ENCODE measurements at regions of chr11 and their contacts with region 1.

Region 1: GRCh38 chr11:910589-911195 is at the start of gene CHID1:
- DNase-seq: peak; percentile 89 to 94 (median 89)
- ATAC-seq: peak; percentile 84 to 97 (median 96)
- H3K4me3 ChIP-seq: peak within 1 kb of the TSS; percentile 39 to 98 (median 92)
- H3K27ac ChIP-seq: peak within 1 kb of the TSS; percentile 79 to 99 (median 95)
- H3K4me1 ChIP-seq: peaks cover 0 to 24% (median 13%) of the 10 kb centered on the region in 12 donors
- H3K27me3 ChIP-seq: no peaks in the 10 kb centered on the region
- CTCF ChIP-seq: peak in 4 of 12 donors; percentile 4 to 23 (median 18)
- POLR2A ChIP-seq: peak in 1 of 2 donors; percentile 59
- total RNA-seq, gene CHID1: 42.0 to 87.7 (median 58.9) TPM

Region 2: GRCh38 chr11:765025-765801 is 145.5 kb before region 1 on chr11:
- intact Hi-C with region 1: no loop called
- DNase-seq: peak in 2 of 5 donors; percentile 62 to 69
- ATAC-seq: peak in 3 of 4 donors; percentile 57 to 74 (median 69)
- H3K4me3 ChIP-seq: no peak overlapping the region
- H3K27ac ChIP-seq: no peak overlapping the region
- H3K4me1 ChIP-seq: no peaks in the 10 kb centered on the region
- H3K27me3 ChIP-seq: no peaks in the 10 kb centered on the region
- CTCF ChIP-seq: peak; percentile 41 to 60 (median 48)
- POLR2A ChIP-seq: no peak

Region 3: GRCh38 chr11:798093-798713 is 112.5 kb before region 1 on chr11 and contains the start of gene SLC25A22:
- intact Hi-C with region 1: loop called in 1 of 10 experiments (anchors 5 kb)
- DNase-seq: peak; percentile 74 to 90 (median 80)
- ATAC-seq: peak; percentile 21 to 77 (median 56)
- H3K4me3 ChIP-seq: peak within 1 kb of the TSS; percentile 50 to 89 (median 78)
- H3K27ac ChIP-seq: peak within 1 kb of the TSS; percentile 37 to 88 (median 84)
- H3K4me1 ChIP-seq: peaks cover 6 to 40% (median 24%) of the 10 kb centered on the region in 12 donors
- H3K27me3 ChIP-seq: no peaks in the 10 kb centered on the region
- CTCF ChIP-seq: peak; percentile 61 to 96 (median 81)
- POLR2A ChIP-seq: peak in 1 of 2 donors; percentile 15
- total RNA-seq, gene SLC25A22: 2.1 to 12.8 (median 4.4) TPM

Region 4: GRCh38 chr11:809287-810039 is 101.2 kb before region 1 on chr11 and contains the start of gene RPLP2:
- intact Hi-C with region 1: loop called in 1 of 10 experiments (anchors 5 kb)
- DNase-seq: peak; percentile 98 to 99 (median 99)
- ATAC-seq: peak; percentile 89 to 95 (median 93)
- H3K4me3 ChIP-seq: peak within 1 kb of the TSS; percentile 73 to 100 (median 96)
- H3K27ac ChIP-seq: peak within 1 kb of the TSS; percentile 76 to 100 (median 96)
- H3K4me1 ChIP-seq: peaks cover 5 to 50% (median 35%) of the 10 kb centered on the region in 12 donors
- H3K27me3 ChIP-seq: no peaks in the 10 kb centered on the region
- CTCF ChIP-seq: no peak
- POLR2A ChIP-seq: peak; percentile 60 to 81
- total RNA-seq, gene RPLP2: 236 to 1,207 (median 933) TPM

Region 5: GRCh38 chr11:848380-848931 is 62.2 kb before region 1 on chr11:
- intact Hi-C with region 1: loop called in 2 of 10 experiments (anchors 1 to 10 kb)
- DNase-seq: peak in 1 of 5 donors; percentile 61
- ATAC-seq: peak in 2 of 4 donors; percentile 7 to 15
- H3K4me3 ChIP-seq: peak overlapping the region in 2 of 12 donors; percentile 57 to 59
- H3K27ac ChIP-seq: no peak overlapping the region
- H3K4me1 ChIP-seq: peaks cover 2 to 83% (median 43%) of the 10 kb centered on the region in 12 donors
- H3K27me3 ChIP-seq: peaks cover 0 to 14% (median 0%) of the 10 kb centered on the region in 9 donors
- CTCF ChIP-seq: peak; percentile 82 to 93 (median 88)
- POLR2A ChIP-seq: no peak

Region 6: DNA sequence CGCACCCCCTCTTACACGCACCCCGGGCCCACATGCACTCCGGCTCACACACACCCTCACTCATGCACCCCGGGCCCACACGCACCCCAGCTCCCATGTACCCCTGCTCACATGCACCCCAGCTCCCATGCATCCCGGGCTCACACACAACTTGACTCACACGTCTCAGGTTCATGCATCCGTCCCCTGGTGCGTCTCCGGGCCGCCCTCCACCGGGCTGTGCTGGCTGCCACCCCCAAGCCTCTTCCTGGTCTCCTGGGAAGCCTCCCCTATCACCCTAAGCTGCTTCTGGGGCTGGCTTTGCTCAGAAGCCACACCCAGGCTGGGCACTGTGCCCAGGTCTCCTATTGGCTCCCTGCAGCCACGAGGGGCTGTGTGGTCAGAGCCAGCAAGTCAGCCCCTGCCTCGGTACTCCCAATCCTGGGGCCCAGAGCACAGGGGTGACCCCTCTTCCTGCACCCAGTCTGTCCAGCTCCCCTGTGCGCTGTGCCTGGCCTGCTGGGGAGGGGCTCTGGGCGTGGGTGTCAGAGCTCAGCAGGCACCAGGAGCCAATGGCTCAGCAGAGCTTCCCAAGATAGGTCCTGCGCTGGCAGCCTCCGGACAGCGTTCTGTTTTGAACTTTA is 51.1 kb before region 1 on chr11:
- intact Hi-C with region 1: loop called in 1 of 10 experiments (anchors 10 kb)
- DNase-seq: peak; percentile 75 to 91 (median 85)
- ATAC-seq: peak; percentile 60 to 82 (median 76)
- H3K4me3 ChIP-seq: peak overlapping the region in 6 of 12 donors; percentile 2 to 39 (median 16)
- H3K27ac ChIP-seq: peak overlapping the region in 8 of 12 donors; percentile 0 to 79 (median 58)
- H3K4me1 ChIP-seq: peaks cover 4 to 48% (median 18%) of the 10 kb centered on the region in 12 donors
- H3K27me3 ChIP-seq: no peaks in the 10 kb centered on the region
- CTCF ChIP-seq: no peak
- POLR2A ChIP-seq: no peak

Region 7: DNA sequence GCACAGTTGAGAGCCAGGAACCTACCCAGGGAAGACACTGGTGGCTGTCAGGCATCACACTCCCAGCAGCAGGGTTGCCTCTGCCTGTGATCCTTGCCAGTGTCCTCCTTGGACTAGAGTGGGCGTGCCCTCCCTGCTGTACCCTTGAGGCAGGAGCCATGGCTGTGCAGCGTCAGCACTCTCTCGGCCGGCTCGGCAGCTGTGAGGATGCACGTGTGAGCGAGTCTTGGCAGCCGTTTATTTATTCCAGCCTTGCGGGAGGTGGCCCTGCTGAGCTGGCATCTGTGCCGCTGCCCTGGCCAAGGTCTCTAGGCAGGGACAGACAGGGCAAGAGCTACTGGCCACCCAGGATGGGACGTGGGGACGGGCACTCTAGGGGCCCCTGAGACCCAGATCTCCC is 34.2 kb before region 1 on chr11:
- intact Hi-C with region 1: loop called in 1 of 10 experiments (anchors 1 kb)
- DNase-seq: peak in 4 of 5 donors; percentile 62 to 82 (median 70)
- ATAC-seq: peak; percentile 88 to 94 (median 91)
- H3K4me3 ChIP-seq: no peak overlapping the region
- H3K27ac ChIP-seq: peak overlapping the region in 3 of 12 donors; percentile 15 to 52 (median 40)
- H3K4me1 ChIP-seq: peaks cover 0 to 12% (median 0%) of the 10 kb centered on the region in 12 donors
- H3K27me3 ChIP-seq: no peaks in the 10 kb centered on the region
- CTCF ChIP-seq: no peak
- POLR2A ChIP-seq: no peak